ENCODE measurements at regions of chr10 and their contacts with region 1.

Region 1: GRCh38 chr10:7410862-7411670 is at the start of gene SFMBT2:
- DNase-seq: peak; percentile 63 to 88 (median 84)
- ATAC-seq: peak; percentile 65 to 79
- H3K4me3 ChIP-seq: peak within 1 kb of the TSS; percentile 95
- H3K27ac ChIP-seq: peak within 1 kb of the TSS; percentile 62
- H3K4me1 ChIP-seq: peaks cover 3% of the 10 kb centered on the region
- H3K27me3 ChIP-seq: no peaks in the 10 kb centered on the region
- total RNA-seq, gene SFMBT2: 11.3 to 12.9 (median 12.1) TPM

Region 2: DNA sequence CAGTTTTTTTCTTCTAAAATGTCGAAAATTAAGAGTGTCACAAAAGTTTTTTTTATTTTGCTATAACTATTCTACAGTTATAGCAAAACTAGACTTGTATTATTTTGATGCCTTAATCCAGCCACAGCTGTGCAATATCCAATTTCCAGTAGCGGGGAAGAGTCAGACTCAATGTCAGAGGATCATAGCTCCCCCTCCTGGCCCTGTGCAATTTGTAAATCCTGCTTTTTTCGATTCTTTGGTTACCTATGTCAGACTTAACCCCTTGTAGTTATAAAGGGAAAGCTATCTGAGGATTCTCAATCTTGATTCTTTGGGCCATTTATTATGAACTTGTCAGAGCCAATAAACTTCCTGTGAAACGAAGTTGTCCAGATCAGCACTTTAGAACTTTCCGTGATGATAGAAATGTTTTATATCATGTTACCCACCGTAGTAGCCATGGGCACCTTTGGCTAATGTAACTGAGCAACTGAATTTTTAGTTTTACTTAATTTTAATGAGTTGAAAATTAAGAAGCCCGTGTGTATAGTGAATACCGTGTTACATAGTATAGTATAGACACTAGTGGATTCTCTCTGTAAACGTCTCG is 743.3 kb before region 1 on chr10:
- intact Hi-C with region 1: loop called in 2 of 4 experiments (anchors 10 kb)
- DNase-seq: no peak
- ATAC-seq: no peak
- H3K4me3 ChIP-seq: no peak overlapping the region
- H3K27ac ChIP-seq: no peak overlapping the region
- H3K4me1 ChIP-seq: no peaks in the 10 kb centered on the region
- H3K27me3 ChIP-seq: no peaks in the 10 kb centered on the region

Region 3: DNA sequence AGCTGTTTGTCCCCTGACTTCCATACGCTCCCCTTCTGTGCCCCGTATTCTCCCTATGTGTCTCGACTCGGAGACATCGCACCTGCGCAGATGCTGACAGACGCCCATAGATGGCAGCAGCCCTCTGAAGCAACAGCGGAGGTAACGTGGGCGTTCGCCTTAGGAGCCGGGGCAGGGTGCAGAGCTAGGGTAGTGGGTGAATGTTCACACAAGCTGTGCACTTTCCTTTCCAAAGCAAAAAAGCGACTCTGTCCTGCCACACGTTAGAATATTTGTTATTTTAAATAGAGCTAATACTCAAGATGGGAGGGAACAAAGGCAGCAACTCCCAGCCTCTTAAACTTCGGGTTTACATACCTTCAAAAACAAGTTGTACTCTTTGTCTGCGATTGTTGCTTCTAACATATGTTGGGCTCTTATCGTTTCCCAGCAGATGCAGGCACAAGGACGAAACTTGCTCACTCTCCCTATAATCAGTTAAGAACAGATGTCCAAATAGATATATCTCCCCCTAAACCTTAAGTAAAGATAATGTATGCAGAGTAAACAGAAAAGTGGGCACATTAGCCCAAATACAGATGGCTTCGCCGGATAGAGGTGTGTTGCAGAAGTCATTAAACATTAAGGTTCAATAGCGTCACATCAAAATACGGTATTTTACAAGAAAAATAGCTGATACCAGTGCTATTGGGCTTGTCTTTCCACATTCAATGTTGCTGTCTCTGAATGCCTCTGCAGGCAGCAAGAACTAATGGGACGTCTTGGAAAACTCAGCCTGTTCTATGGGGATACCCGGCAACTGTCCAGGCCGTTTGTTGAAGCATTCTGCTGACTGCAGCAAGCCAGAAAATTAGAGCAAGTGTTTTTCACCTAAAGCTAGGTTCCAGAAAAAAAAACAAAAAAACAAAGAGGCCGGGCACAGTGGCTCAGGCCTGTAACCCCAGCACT is 490.7 kb before region 1 on chr10:
- intact Hi-C with region 1: loop called in 2 of 4 experiments (anchors 10 kb)
- DNase-seq: peak; percentile 40 to 81 (median 78)
- ATAC-seq: peak; percentile 86 to 91
- H3K4me3 ChIP-seq: no peak overlapping the region
- H3K27ac ChIP-seq: no peak overlapping the region
- H3K4me1 ChIP-seq: no peaks in the 10 kb centered on the region
- H3K27me3 ChIP-seq: no peaks in the 10 kb centered on the region

Region 4: GRCh38 chr10:7121154-7121810 is 289.8 kb before region 1 on chr10:
- intact Hi-C with region 1: loop called (anchors 2 to 10 kb)
- DNase-seq: peak; percentile 47 to 72 (median 72)
- ATAC-seq: peak; percentile 64 to 70
- H3K4me3 ChIP-seq: no peak overlapping the region
- H3K27ac ChIP-seq: no peak overlapping the region
- H3K4me1 ChIP-seq: no peaks in the 10 kb centered on the region
- H3K27me3 ChIP-seq: no peaks in the 10 kb centered on the region

Region 5: GRCh38 chr10:7337431-7338171 is 73.5 kb before region 1 on chr10:
- intact Hi-C with region 1: loop called in 1 of 4 experiments (anchors 10 kb)
- DNase-seq: no peak
- ATAC-seq: no peak
- H3K4me3 ChIP-seq: no peak overlapping the region
- H3K27ac ChIP-seq: no peak overlapping the region
- H3K4me1 ChIP-seq: peaks cover 10% of the 10 kb centered on the region
- H3K27me3 ChIP-seq: no peaks in the 10 kb centered on the region